ENCODE measurements at regions of chr14 and their contacts with region 1.

Region 1: GRCh38 chr14:74493343-74494261 is at the start of gene ISCA2:
- DNase-seq: peak; percentile 100
- H3K4me3 Mint-ChIP-seq: peak within 1 kb of the TSS; percentile 87
- H3K27ac Mint-ChIP-seq: peak within 1 kb of the TSS; percentile 80
- H3K4me1 Mint-ChIP-seq: peaks cover 21% of the 10 kb centered on the region
- H3K27me3 Mint-ChIP-seq: no peaks in the 10 kb centered on the region
- total RNA-seq, gene ISCA2: 33.6 to 35.2 TPM

Region 2: DNA sequence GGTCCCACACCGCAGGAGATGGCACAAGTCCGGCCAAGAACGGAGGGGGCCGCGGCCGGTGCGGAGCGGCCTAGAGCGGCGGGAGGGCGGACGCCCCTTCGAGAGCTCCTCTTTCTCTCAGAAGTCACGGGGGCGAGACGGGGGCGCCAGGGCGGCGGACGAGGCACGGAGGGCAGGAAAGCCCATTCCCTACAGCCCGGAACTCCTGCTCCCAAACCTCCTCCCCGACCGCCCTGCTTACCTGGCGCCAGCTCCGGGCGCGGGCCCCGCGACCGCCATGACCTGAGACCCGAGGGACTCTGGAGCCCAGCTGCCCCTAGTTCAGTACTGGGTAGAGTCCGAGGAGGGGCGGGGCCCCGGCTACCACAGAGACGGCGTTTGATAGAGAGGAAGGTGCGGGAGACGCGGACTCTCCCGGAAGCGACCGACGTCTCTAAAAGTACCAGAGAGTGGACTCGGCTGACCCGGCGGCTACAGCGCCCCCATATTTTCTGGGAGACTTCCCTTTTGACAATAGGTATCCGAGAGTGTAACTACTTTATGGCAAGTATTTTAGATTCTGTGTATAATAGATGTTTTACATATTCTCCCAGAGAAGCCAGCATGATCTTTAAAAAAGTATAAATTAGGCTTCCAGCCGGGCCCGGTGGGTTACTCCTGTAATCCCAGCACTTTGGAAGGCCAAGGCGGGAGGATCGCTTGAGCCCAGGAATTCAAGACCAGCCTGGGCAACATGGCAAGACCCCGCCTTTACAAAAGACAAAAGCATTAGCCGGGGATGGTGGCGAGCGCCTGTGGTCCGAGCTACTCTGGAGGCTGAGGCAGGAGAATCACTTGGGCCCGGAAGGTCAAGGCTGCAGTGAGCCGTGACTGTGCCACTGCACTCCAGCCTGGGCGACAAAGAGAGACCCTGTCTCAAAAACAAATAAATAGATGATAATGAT is 190.7 kb before region 1 on chr14 and contains the start of gene ABCD4:
- CTCF ChIA-PET with region 1: no interaction called
- POLR2A ChIA-PET with region 1: no interaction called
- intact Hi-C with region 1: loop called (anchors 2 kb)
- DNase-seq: peak; percentile 92
- H3K4me3 Mint-ChIP-seq: peak within 1 kb of the TSS; percentile 100
- H3K27ac Mint-ChIP-seq: peak within 1 kb of the TSS; percentile 94
- H3K4me1 Mint-ChIP-seq: peaks cover 32% of the 10 kb centered on the region
- H3K27me3 Mint-ChIP-seq: no peaks in the 10 kb centered on the region
- total RNA-seq, gene ABCD4: 42.7 to 47.7 TPM

Region 3: GRCh38 chr14:74401504-74402241 is 91.9 kb before region 1 on chr14:
- CTCF ChIA-PET with region 1: no interaction called
- POLR2A ChIA-PET with region 1: no interaction called
- intact Hi-C with region 1: loop called (anchors 1 kb)
- DNase-seq: peak; percentile 75
- H3K4me3 Mint-ChIP-seq: no peak overlapping the region
- H3K27ac Mint-ChIP-seq: peak overlapping the region; percentile 64
- H3K4me1 Mint-ChIP-seq: peaks cover 16% of the 10 kb centered on the region
- H3K27me3 Mint-ChIP-seq: no peaks in the 10 kb centered on the region

Region 4: DNA sequence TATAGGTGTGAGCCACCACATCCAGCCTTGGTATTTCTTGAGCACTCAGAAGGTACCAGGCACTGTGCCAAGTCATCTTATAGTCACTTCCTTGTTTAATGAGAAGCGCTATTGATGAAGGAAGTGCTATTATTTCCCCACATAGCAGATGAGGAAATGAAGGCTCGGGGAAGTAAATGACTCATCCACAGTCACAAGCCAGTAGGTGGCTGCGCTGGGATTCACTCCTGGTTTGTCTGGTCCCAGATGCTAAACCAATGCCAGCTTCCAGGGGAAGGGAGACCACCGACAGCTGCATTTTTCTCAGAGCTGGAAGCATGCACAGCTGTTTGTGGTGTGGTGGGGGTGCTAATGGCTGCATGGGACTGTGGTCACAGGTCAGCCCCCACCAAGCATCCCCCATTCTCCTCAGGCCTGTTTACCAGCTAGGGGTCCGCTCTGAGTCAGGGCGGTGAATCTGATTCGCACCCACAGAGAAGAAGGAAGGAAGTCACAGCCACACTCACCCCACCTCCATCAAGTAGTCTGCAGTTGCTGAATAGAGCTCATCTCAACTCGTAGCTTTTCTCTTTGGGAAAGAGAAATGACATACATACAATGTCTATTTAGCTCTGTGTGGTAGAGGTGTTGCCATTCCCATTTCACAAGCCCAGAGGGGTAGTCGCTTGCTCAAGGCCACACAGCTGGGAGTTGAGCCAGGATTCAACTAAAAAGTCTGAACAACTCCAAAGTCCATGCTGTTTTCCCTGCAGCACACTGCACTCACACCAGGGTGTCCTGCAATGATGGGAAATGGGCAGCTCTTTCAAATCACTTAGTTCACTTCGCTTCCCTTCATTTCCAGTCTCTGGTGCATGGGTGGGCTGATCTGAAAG is 124.7 kb after region 1 on chr14:
- CTCF ChIA-PET with region 1: interaction called, 5 read pairs
- POLR2A ChIA-PET with region 1: no interaction called
- intact Hi-C with region 1: loop called (anchors 5 kb)
- DNase-seq: peak; percentile 79
- H3K4me3 Mint-ChIP-seq: no peak overlapping the region
- H3K27ac Mint-ChIP-seq: peak overlapping the region; percentile 73
- H3K4me1 Mint-ChIP-seq: peaks cover 60% of the 10 kb centered on the region
- H3K27me3 Mint-ChIP-seq: peaks cover 1% of the 10 kb centered on the region

Region 5: DNA sequence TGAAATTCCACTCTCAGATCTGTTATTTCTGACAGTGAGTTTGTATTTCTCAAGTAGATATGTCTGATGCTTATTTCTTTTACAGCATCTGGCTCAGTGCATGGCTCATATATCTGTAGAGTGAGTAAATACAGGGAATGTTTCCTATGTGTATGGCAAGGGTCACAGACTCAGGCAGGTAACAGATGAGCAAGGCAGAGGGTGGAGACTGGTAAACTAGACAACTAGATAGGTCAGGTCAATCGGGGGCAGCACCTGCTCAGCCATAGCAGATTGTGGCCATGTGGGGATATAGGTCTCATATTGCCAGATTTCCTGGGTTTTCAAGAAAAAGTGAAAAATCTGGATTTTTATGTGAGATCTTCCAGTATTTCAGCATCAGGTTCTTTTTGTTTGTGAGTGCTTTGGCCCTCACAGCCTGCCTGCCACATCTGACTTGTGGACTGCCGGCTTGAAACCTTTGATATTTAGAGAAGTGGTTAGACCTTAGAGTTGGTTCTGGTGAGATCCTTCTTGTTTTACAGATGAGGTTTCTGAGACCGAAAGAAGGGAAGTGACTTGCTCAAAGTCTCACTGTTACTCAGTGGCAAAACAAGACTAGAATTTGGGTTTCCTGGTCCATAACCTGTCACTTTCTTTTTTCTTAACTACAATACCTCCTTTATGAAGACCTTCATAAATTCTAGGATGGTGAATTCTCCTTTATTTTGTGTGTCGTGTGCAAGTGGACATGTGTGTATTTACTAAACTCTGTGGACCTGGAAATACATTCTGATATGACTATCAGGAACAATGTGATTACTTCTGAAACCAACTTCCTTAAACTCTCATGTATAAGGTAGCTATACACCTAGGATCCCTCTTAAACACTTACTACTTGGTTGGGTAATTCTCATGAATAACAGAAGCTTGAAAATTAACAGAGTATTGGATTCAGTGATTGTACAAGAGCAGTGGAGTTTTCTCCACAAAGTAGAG is 347.9 kb after region 1 on chr14:
- CTCF ChIA-PET with region 1: no interaction called
- POLR2A ChIA-PET with region 1: no interaction called
- intact Hi-C with region 1: loop called (anchors 5 kb)
- DNase-seq: peak; percentile 49
- H3K4me3 Mint-ChIP-seq: no peak overlapping the region
- H3K27ac Mint-ChIP-seq: peak overlapping the region; percentile 83
- H3K4me1 Mint-ChIP-seq: peaks cover 55% of the 10 kb centered on the region
- H3K27me3 Mint-ChIP-seq: no peaks in the 10 kb centered on the region

Measured in activated CD4-positive, alpha-beta memory T cell treated with anti-CD3 and anti-CD28 coated beads for 36 hours (primary cell).